PC-9 (cell line): ENCODE measurements at regions of chr7 and their contacts with region 1.

Region 1: GRCh38 chr7:44797329-44798251 is 1.1 kb downstream of the PPIA start:
- DNase-seq: peak; percentile 87
- H3K4me3 ChIP-seq: peak overlapping the region; percentile 67
- H3K27ac ChIP-seq: peak overlapping the region; percentile 93
- H3K4me1 ChIP-seq: peaks cover 26% of the 10 kb centered on the region
- H3K27me3 ChIP-seq: no peaks in the 10 kb centered on the region
- CTCF ChIP-seq: peak; percentile 79; the same call in 1 of the 2 replicates

Region 2: GRCh38 chr7:44606450-44607254 is 190.9 kb before region 1 on chr7 and contains the start of gene OGDH:
- CTCF ChIA-PET with region 1: no interaction called
- POLR2A ChIA-PET with region 1: interaction called, 5 read pairs
- intact Hi-C with region 1: loop called (anchors 1 kb)
- DNase-seq: peak; percentile 98 to 100
- H3K4me3 ChIP-seq: peak within 1 kb of the TSS; percentile 81
- H3K27ac ChIP-seq: peak within 1 kb of the TSS; percentile 73
- H3K4me1 ChIP-seq: peaks cover 60% of the 10 kb centered on the region
- H3K27me3 ChIP-seq: no peaks in the 10 kb centered on the region
- CTCF ChIP-seq: no peak
- total RNA-seq, gene OGDH: 93.6 and 135 TPM in 2 replicates

Region 3: DNA sequence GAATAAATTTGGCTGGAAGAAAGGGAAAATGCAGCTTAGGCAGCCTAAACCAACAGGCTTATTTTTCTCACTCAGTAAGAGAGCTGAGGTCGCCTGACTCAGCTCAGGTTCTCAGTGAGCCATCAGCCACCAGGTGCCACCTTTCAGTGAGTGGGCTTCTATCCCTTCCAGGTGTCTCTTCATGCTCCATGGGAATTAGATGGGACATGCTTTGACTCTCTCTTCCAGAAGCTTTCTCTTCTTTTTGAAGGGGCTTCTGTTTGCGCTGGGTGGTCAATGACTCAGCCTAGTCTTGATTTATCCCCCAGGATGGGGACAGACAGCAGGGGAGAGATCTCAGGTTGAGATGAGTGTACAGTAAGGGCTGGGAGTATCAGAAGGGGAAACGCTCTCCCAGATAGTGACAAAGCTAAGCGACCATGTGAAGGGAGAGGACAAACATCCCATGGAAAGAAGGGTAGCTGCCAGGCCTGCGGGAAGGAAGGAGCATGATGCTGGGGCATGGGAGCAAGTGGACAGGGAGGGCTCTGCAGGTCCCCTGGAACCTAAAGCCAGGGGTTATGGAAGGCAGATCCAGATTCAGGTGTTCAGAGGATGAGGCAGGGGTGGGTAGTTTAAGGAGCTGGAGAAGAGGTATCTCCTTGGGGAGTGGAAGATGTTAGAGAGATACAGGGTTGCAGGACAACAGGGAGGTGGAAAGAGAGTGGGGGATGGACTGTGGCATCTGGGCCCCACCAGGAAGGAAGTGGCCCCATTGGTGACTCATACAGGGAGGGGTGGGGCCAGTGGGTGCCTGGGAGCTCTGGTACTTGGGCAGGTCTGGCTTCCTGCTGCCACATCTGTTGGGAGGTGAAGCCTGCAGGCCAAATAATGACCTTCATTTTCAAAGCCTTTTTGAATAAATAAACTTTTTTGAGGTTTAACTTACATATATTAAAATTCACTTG is 158.7 kb before region 1 on chr7:
- CTCF ChIA-PET with region 1: no interaction called
- POLR2A ChIA-PET with region 1: interaction called, 9 read pairs
- intact Hi-C with region 1: loop called (anchors 2 kb)
- DNase-seq: peak; percentile 90 to 93
- H3K4me3 ChIP-seq: peak overlapping the region; percentile 12; the same call in 1 of the 2 replicates
- H3K27ac ChIP-seq: peak overlapping the region; percentile 96
- H3K4me1 ChIP-seq: peaks cover 67% of the 10 kb centered on the region
- H3K27me3 ChIP-seq: no peaks in the 10 kb centered on the region
- CTCF ChIP-seq: no peak; the same call in 1 of the 2 replicates

Region 4: GRCh38 chr7:44685723-44686122 is 111.9 kb before region 1 on chr7:
- CTCF ChIA-PET with region 1: no interaction called
- POLR2A ChIA-PET with region 1: no interaction called
- intact Hi-C with region 1: loop called (anchors 10 kb)
- DNase-seq: no peak
- H3K4me3 ChIP-seq: no peak overlapping the region
- H3K27ac ChIP-seq: no peak overlapping the region
- H3K4me1 ChIP-seq: no peaks in the 10 kb centered on the region
- H3K27me3 ChIP-seq: no peaks in the 10 kb centered on the region
- CTCF ChIP-seq: no peak

Region 5: GRCh38 chr7:44712012-44712411 is 85.6 kb before region 1 on chr7:
- CTCF ChIA-PET with region 1: interaction called, 3 read pairs
- POLR2A ChIA-PET with region 1: no interaction called
- intact Hi-C with region 1: loop called (anchors 2 kb)
- DNase-seq: peak; percentile 87 to 97
- H3K4me3 ChIP-seq: no peak overlapping the region
- H3K27ac ChIP-seq: peak overlapping the region; percentile 69
- H3K4me1 ChIP-seq: peaks cover 52% of the 10 kb centered on the region
- H3K27me3 ChIP-seq: no peaks in the 10 kb centered on the region
- CTCF ChIP-seq: no peak

Region 6: GRCh38 chr7:44764665-44765578 is 32.7 kb before region 1 on chr7:
- CTCF ChIA-PET with region 1: no interaction called
- POLR2A ChIA-PET with region 1: interaction called, 3 read pairs
- intact Hi-C with region 1: loop called (anchors 1 kb)
- DNase-seq: no peak
- H3K4me3 ChIP-seq: no peak overlapping the region
- H3K27ac ChIP-seq: no peak overlapping the region
- H3K4me1 ChIP-seq: peaks cover 5% of the 10 kb centered on the region
- H3K27me3 ChIP-seq: no peaks in the 10 kb centered on the region
- CTCF ChIP-seq: peak; percentile 52